KBM-7 (cell line): ENCODE measurements at regions of chr17 and their contacts with region 1.

Region 1: DNA sequence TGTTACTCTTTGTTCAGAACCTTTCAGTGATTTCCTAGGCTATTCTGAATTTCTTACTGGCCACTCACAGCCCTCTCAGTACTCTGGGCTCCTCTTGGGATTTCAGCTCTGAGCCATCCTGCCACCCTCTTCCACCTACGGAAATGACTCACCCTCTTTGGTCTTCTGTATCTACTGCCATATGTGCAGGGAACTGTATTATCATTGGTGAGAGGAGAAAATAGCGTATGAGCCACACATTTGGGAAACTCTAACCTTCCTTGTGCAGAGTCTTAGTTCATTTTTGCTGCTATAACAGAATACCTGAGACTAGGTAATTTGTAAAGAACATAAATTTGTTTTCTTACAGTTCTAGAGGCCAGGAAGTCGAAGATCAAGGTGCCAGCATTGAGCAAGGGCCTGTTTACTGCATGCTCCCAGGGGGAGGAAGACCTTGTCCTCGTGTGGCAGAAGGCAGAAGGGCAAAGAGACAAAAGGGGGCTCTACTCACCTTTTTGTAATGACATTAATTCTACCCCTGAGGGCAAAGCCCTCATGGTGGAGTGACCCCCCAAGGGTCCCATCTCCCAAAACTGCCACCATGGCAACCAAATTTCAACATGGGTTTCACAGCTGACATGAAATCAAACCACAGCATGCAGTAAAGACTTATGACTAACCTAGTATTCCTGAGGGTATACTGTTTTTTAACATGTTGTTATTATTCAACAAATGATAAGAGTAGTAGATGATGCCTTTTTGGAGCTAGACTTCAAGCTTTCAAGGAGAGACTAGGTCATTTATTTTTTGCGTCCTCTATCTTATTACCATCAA is 191.8 kb downstream of the PRKCA start:
- DNase-seq: peak; percentile 58

Region 2: GRCh38 chr17:65514082-65514481 is 980.1 kb before region 1 on chr17:
- in situ Hi-C with region 1: no loop called
- DNase-seq: no peak

Region 3: DNA sequence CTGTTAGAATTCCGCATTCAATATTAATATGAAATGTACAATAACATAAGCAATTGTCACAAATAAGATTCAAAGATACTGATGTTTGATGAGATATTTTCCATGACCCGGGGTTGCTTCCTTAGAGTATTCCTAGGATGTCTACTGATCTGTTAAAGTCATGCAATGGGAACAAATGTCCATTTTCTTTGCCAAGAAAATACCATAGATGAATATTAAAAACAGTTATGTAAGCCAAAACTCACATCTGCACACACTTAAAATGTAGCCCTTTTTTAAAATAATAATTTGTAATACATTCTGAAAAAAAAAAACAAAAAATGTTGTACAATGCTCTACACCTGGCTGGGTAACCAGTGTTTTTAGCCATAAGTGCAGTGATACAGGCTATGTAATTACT is 673.4 kb before region 1 on chr17:
- in situ Hi-C with region 1: no loop called
- DNase-seq: no peak

Region 4: DNA sequence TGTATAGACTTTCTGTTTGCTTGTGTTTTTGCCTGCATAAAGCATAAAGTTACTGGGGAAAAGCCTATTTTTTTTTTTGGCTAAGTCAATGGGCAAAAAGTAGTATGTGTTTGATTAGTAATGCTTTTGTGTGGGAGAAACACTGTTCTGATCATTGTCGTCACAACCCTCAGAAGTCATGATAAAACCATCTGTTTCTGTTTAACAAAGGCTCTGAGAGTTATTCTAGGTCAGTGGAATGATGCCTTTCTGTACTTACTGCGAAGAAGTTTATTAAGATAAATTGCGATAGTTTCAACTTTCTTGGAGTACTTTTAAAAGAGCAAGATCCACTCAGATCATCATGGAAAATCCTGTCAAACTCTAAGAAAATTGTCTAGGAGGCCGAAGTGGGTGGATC is 110.9 kb before region 1 on chr17:
- in situ Hi-C with region 1: loop called (anchors 25 kb)
- DNase-seq: no peak

Region 5: DNA sequence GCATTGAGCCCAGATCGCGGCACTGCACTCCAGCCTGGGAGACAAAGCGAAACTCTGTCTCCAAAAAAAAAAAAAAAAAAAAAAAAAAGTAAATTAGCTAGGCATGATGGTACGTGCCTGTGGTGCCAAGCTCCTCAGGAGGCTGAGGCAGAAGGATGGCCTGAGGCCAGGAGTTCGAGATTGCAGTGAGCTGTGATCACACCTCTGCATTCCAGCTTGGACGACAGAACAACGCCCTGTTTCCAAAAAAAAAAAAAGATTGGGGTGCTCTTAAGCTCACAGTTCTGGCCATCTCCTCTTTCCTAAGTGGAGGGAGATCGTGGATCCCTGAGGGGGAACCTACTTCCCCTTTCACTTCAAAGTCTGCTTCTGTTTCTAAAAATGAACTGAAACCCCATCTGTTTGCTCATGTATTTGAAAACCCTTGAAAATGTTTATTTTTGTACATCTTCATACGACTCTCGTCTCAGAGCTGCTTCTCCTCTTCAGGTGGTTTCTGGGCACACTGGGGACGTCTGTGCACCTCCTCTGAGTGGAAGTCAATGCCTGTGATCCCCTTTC is 53.0 kb before region 1 on chr17:
- in situ Hi-C with region 1: no loop called
- DNase-seq: peak; percentile 62